ENCODE measurements at regions of chr3 and their contacts with region 1.

Region 1: DNA sequence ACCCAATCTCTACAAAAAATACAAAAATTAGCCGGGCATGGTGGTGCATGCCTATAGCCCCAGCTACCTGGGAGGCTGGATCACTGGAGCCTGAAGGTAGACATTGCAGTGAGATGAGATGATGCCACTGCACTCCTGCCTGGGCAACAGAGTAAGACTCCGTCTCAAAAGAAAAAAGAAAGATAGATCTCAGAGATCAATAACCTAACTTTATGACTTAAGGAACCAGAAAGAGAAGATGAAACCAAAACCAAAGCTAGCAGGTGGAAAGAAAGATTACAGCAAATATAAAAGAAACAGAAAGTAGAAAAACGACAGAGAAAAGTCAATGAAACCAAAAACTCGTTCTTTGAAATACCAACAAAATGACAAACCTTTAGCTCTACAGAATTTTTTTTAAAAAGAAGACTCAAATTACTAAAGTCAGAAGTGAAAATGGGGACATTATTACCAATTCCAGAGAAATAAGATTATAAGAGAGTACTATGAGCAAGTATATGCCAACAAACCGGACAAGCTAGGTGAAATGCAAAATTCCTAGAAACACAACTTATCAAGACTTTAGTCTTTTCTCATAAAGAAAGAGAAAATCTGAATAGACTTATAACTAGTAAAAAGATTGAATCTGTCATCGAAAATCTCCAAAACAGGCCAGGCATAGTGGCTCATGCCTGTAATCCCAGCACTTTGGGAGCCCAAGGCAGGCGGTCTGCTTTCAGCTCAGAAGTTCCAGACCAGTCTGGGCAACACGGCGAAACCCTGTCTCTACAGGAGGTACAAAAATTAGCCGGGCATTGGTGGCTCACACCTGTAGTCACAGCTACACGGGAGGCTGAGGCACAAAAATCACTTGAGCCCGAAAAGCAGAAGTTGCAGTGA is 35.0 kb downstream of the ACAP2 start:
- DNase-seq: peak; percentile 62
- H3K4me3 Mint-ChIP-seq: peak overlapping the region; percentile 51
- H3K27ac Mint-ChIP-seq: peak overlapping the region; percentile 54
- H3K4me1 Mint-ChIP-seq: peaks cover 32% of the 10 kb centered on the region
- H3K27me3 Mint-ChIP-seq: no peaks in the 10 kb centered on the region

Region 2: GRCh38 chr3:195467641-195468390 is 60.0 kb after region 1 on chr3:
- intact Hi-C with region 1: loop called (anchors 2 kb)
- DNase-seq: peak; percentile 65
- H3K4me3 Mint-ChIP-seq: peak overlapping the region; percentile 3
- H3K27ac Mint-ChIP-seq: peak overlapping the region; percentile 62
- H3K4me1 Mint-ChIP-seq: peaks cover 12% of the 10 kb centered on the region
- H3K27me3 Mint-ChIP-seq: no peaks in the 10 kb centered on the region

Measured in activated CD4-positive, alpha-beta T cell treated with anti-CD3 and anti-CD28 coated beads, Interleukin-2, amount 10 ng/mL, durations not matched to agents 24 days and 14 days (primary cell).